Posterior vena cava (tissue), 2 donors: ENCODE measurements at regions of chr6 and their contacts with region 1.

Region 1: DNA sequence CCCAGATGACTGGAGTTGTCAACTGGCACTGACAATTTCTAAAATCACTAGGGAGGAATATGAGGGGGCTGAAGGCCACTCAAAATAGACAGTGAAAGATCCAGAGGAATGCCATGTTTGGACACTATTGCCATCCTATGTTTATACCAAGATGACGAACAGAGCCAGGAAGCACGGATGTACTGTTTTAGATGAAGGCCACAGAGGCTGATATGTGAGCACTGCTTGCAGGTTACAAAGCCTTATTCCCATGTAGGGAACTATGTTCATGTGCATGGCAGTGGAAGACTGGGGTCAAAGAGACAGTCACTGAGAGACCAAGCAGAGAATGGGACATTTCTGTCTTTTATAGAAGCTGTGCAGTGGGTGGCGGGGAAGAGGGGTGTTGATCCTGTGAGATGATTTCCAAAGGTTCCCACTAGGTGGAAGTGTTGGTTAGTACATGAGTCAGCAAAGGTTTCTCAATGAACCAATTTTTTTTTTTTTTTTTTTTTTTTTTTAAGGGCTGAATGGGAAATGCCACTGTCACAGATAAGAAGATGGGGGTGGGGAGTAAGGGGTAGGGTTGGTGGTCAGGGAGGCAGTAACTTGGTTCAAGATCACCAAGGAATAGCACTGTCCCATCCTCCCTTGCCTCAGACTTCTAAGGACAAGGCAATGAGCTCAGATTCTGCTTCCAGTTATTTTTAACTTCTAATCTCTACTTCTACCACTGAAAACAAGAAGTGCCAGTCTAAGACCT is 46.7 kb upstream of the MOCS1 start:
- DNase-seq: no peak

Region 2: GRCh38 chr6:40308533-40309306 is 327.7 kb after region 1 on chr6:
- intact Hi-C with region 1: loop called in 1 of 2 experiments (anchors 10 kb)
- DNase-seq: no peak